ENCODE measurements at regions of chr5 and their contacts with region 1.

Region 1: DNA sequence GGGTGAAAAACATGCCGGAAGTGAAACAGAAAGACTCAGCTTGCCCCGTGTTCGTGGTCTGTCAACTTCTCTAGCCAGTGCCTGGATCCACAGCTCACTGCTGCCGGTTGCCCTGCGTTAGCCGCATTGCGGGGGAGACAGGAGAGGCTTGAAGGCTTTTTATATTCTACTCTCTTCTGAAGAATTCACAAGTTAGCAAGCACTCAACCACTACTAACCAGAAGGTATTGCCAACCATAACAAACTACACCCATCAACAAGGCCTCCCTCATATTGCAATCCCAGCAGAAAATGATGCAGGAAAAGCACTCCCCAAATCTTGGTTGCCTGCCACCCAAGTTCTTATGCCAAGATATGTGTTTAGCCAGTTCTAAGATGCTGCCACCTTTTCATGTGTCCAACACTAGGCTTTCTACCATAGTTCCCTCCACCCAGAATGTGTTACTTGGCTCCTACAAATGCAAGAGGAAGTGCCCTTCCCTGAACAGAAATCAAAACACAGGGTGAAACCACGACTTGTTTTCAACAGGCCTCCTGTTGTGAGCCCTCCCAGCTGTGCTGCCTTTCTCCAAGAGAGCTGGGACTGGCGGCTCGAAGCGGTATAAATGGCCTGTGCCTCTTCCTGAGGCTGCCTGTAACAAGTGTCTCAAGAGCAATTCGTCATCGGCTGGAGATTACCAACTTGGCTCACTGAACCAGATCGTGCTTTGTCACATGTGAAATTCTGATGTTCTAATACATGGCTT is 129.0 kb downstream of the SNX18 start:
- DNase-seq: peak; percentile 91
- H3K4me3 ChIP-seq: peak overlapping the region; percentile 62
- H3K27ac ChIP-seq: peak overlapping the region; percentile 98
- H3K4me1 ChIP-seq: peaks cover 37% of the 10 kb centered on the region
- CTCF ChIP-seq: no peak

Region 2: DNA sequence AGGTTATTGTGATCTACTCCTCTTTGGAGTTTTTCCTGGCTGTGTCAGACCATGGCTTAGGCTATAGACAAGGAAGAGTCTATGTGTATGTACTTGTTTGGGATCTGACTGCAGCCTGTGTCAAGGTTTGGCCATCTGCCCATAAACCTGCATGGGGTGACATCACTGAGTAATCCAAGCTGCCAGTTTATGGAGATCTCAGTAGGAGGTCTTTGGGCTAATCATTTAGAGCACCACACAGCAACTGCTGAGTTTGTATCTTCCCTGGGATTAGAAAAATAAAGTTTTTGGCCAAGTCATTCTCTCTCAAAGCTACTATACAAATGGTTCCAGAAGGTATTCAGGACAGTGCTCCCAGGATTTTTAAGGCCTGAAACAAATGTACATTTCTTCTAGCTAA is 256.5 kb before region 1 on chr5:
- CTCF ChIA-PET with region 1: no interaction called
- POLR2A ChIA-PET with region 1: no interaction called
- intact Hi-C with region 1: no loop called
- DNase-seq: no peak
- H3K4me3 ChIP-seq: no peak overlapping the region
- H3K27ac ChIP-seq: no peak overlapping the region
- H3K4me1 ChIP-seq: no peaks in the 10 kb centered on the region
- CTCF ChIP-seq: no peak

Region 3: DNA sequence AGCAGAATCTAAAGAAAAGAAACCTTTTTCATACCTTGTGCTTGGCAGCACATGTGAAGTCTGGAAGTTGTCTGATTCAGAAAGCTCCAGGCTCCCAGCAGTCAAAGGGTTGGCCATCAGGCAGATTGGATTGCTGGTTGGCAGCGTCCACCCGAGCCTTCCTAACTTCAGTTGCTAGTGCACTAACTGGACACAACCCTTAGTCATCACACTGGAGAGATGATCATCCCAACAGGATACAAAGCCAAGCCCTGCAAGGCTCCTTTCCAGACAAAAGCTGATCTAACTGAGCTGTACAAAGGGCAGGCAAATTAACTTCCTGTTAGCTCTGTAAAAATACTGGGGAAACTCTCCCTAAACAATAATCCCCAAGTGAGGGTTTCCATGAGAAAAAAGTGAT is 56.6 kb after region 1 on chr5:
- CTCF ChIA-PET with region 1: no interaction called
- POLR2A ChIA-PET with region 1: no interaction called
- intact Hi-C with region 1: no loop called
- DNase-seq: no peak
- H3K4me3 ChIP-seq: no peak overlapping the region
- H3K27ac ChIP-seq: no peak overlapping the region
- H3K4me1 ChIP-seq: peaks cover 4% of the 10 kb centered on the region
- CTCF ChIP-seq: no peak

Region 4: DNA sequence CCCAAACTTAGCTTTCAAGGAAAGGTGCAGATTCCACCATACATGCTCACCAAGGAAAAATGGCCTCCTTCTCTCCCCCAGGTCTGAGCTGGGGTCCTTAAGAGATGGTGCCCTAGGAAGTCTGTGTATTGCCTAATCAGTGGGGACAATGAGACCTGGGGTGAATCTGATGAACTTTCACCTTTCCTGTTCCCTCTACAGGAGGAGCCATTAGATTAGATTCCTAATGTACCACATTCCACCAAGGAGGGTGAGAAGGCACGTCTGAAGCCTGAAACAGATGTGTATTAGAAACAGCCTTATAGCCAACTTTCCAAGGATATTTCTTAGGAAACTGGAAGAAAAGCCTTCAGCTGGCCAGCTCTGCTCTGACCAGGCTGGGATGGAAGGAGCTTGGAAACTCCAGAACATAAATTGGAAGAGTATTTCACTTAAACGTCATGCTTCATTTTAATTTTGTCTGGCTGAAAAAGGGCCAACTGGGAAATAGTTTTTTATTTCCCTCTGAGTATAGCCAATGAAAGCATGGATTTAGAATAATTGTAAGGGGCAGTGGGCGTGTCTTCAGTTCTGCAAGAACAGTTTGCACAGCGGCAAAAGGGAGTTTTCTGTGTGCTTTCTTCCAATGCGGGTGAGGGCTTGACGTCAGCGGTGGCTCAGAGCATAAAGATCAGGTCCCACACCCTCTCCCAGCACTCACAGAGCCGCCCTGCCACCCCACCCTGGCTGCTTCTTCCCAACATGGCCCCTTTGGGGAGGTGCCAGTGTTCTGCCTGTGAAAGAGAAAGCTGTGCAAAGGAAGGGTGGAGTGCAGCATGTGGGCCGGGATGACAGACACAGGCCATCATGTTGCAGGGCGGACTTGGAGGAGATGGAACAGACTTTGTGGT is 128.0 kb after region 1 on chr5:
- CTCF ChIA-PET with region 1: no interaction called
- POLR2A ChIA-PET with region 1: no interaction called
- intact Hi-C with region 1: no loop called
- DNase-seq: no peak
- H3K4me3 ChIP-seq: no peak overlapping the region
- H3K27ac ChIP-seq: no peak overlapping the region
- H3K4me1 ChIP-seq: no peaks in the 10 kb centered on the region
- CTCF ChIP-seq: no peak

Region 5: DNA sequence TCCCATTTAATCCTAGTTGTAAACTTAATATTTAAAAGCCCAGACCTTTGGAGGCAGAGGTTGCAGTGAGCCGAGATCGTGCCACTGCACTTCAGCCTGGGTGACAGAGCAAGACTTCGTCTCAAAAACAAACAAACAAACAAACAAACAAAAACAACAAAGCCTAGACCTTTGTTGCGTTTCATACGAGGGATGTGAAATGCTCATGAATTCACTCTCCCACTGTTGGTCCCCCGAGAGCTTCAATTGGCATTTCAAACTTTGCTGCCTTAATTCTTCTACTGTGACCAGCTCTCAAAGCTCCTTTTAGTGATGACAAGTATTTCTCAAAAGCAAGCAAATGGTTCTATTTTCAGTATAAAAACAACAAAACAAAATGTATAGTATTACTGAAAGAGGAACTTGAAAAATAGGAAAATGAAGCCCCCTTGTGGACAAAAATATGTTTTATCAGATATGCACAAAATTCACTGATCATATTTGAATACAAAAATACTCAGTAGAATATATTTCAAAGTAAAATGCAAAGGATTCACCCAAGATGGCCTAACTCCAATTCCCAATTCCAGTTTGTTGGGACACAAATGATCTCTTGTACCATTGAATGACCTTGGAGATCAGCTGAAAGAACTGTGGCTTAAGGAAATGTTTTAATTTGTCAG is 198.5 kb after region 1 on chr5:
- CTCF ChIA-PET with region 1: interaction called, 3 read pairs
- POLR2A ChIA-PET with region 1: no interaction called
- intact Hi-C with region 1: loop called (anchors 2 kb)
- DNase-seq: peak; percentile 70
- H3K4me3 ChIP-seq: peak overlapping the region; percentile 13
- H3K27ac ChIP-seq: no peak overlapping the region
- H3K4me1 ChIP-seq: no peaks in the 10 kb centered on the region
- CTCF ChIP-seq: peak; percentile 89

Measured in OCI-LY7 (cell line).